Astrocyte of the cerebellum (primary cell): ENCODE measurements at regions of chr15 and their contacts with region 1.

Region 1: DNA sequence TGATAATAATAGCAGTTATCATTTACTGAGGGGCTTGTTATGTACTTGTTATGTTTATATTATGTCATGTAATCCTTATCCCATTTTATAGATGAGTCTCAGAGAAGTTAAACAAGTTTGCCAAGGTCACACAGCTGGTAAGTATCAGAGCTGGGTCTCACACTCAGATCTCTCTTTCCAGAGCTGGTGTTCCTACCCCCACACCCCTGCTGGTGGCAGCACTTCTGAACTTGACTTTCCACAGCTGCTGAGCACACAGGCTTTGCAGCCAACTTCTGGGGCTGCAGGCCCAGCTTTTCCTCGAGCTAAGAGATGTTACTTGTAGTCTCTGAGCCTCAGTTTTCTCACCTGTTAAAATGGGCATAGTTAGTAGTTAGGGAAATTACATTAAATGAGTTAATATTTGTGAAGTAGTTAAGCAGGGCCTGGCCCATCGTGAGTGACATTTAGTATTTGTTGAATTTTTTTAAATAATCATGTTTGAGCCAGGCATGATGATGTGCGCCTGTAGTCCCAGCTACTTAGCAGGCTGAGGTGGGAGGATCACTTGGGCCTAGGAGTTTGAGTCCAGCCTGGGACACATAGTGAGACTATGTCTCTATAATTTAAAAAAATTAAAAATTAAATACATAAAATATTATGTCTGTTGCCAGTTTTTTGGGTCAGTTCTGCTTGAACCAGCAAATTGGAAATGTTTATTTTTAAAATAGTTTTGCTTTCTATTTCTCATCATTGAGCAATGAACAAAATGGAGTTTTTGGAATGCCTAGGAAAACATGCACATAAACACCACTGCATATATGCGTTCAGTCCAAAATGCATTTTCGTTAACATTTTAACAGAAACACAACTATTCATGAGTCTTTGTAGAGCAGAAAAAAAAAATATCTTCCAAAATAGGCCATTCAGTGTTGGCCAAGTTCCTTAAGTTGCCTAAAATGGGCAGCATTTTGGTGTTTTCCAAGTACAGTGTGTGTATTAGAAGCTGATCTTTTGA is 87.3 kb downstream of the SMAD6 start:
- DNase-seq: no peak
- H3K4me3 ChIP-seq: no peak overlapping the region
- CTCF ChIP-seq: peak; percentile 73

Region 2: GRCh38 chr15:66698318-66698961 is 90.9 kb before region 1 on chr15:
- in situ Hi-C with region 1: no loop called
- DNase-seq: no peak
- H3K4me3 ChIP-seq: no peak overlapping the region
- CTCF ChIP-seq: peak; percentile 94

Region 3: GRCh38 chr15:66720206-66721006 is 68.9 kb before region 1 on chr15:
- in situ Hi-C with region 1: loop called (anchors 5 kb)
- DNase-seq: no peak
- H3K4me3 ChIP-seq: no peak overlapping the region
- CTCF ChIP-seq: no peak

Region 4: DNA sequence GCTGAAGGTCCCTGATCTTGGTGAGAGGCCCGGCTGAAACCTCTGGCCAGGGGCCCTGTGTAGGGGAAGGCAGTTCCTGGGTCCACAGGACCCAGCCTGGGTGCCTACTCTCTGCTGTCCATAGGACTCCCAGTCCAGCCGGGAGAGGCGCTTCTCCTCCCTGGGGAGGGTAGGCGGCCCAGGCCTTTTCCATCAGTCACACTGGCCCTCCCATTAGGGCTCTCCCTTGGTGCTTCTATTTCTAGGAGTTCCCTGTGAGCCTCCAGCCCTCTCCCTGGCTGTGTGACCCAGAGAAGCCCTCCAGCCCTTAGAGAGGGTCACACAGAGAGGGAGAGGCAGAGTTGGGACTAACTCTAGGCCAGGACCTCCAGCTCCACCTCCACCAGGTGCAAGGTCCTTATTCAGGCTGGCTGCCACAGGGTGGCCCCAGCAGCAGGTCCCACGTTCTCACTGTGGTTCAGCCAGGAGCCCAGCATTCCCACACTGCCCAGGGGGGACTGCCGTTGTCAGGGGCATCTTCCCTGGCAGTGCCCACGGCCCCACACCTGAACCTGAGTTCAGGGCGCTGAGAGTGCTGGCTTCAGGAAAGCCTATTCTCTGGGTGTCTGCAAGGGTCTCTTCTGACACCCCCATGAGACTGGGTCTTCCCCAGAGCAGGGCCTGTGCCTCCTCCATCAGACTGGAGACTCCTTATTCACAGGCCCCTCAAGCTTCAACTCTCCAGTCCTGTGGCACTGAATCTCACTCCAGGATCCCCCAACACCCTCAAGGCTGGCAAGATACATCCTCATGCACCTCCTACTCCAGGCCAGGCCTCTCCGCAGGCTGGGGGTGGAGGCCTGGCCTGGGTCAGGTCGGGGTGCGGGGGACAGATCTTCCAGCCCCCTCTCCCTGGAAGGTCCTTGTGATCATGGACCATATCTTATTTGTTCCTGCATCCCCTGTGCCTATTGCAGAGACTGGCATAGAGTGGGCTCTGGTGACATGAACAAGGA is 59.7 kb after region 1 on chr15:
- in situ Hi-C with region 1: loop called (anchors 5 kb)
- DNase-seq: no peak
- H3K4me3 ChIP-seq: no peak overlapping the region
- CTCF ChIP-seq: no peak